ENCODE measurements at regions of chr10 and their contacts with region 1.

Region 1: GRCh38 chr10:77846718-77847630 is 79.6 kb downstream of the DLG5 start:
- DNase-seq: peak; percentile 92

Region 2: DNA sequence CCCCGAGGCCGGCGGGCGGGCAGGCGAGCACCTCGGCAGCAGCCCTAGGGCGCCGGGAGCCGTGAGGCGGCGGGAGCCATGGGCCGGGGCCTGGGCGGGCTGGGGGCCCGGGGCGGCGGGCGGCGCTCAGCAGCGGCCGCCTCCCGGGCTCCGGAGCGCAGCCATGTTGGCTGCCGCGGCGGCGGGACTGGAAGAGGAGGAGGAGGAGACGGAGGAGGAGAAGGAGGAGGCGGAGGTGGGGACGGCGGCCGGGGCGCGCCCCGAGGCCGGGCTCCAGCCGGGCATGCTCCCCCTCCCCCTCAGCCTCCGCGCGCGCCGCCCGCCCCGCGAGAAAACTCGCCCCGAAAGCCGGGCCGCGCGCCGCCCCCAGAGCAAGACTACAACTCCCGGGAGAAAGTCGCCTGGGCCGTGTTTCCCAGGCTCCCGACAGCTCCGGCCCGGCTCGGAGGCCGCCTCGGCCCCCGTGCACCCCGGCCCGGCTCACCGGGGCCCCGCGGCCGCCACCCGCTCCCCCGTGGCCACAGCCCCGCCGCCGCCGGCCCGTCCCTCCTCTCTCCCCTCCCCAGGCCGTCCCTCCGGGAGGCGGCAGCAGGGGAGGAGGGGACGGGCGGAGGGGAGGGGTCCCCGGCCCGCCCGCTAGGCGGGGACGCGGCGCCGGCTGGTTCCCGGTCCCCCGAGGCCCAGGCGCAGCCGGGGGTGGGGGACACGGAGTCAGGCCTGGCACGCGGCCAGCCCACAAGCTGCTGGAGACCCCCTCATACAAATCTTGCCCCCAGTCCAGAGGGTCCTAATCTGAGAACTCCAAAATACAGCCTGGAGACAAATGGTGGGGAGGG is 79.8 kb after region 1 on chr10 and contains the start of gene DLG5:
- intact Hi-C with region 1: loop called in 1 of 2 experiments (anchors 5 kb)
- DNase-seq: peak; percentile 88
- total RNA-seq, gene DLG5: 34.4 to 39.9 TPM

Region 3: DNA sequence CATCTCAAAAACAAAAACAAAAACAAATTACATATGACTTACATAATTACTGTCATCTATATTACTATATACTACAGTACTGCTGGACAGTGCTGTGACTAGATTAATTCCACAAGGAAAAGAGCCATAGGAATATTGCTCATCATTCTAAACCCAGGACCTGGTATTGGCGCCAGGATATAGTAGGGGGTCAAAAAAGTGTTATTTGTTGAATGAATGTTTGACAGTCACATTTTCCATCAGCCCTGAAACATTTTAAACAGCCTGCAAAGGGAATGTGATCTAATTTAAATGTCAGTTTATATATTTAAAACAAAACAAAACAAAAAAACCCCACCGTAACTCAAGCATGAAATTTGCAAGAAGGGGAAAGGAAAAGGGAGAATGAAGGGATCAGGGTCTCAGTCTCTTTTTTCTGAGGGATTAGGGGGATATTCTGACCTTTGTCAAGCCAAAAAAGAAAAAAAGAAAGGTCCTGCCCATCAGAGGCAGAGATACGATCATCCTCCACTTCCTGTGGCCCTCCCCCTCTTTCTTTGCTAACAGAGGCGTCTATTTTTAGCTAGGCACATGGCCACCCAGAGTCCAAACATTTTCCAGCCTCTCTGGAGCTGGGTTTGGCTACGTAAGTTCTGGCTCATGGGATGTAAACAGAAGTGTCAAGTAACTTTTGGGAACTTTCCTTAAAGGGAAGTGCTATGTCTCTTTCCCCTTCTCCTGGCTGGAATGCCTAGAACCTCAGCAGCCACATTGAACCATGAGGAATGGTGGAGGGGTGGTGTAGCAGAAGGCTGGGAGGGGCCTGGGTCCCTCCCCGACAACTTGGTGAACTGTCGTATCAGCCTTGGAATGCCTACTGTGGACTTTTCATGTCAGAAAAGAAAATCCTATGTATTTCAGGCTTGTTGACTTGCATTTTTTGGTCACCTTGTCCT is 124.2 kb after region 1 on chr10:
- intact Hi-C with region 1: loop called (anchors 5 to 10 kb)
- DNase-seq: peak; percentile 85

Region 4: GRCh38 chr10:78029269-78030226 is 182.6 kb after region 1 on chr10 and contains the start of gene POLR3A:
- intact Hi-C with region 1: loop called in 1 of 2 experiments (anchors 10 kb)
- DNase-seq: peak; percentile 99
- total RNA-seq, gene POLR3A: 8.2 to 10.1 TPM

Region 5: DNA sequence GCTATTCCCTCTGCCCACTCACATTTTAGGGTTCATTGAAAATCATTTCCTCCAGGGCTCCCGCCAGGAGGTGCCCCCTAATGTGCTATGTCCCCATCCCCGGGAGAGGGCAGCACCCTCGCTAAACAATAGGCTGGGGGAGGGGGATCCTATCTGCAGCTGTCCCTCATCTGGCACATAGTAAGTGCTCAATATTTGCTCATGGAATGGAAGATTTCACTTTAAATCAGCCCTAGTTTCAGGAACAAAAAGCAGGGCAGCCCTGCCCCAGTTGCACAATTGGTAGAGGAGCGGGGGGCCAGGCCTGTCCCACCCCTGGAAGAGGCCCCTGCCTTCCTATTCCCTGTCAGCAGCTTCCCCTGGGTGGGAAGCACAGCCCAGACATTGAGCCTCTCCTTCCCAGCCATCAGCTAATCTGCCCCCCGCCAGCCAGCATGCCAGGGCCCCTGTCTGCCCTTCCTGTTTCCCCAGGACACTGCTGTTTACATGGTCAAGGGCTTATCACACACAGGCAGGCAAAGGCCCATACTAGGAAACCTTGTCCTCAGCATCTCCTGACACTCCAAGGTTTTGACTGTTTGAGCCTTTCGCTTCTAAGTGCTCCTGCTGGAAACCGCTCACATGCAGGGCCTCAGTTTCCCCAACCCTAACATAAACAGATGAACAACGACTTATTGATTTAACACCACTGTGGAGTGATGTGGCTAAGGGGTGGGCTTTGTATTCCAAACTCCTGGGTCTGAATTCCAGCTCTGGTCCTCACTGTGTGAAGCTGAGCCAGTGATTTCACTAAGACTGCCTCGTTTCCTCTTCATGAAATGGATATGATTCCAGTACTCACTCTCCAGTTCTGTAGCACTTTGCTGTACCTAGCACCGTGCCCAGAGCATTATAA is 1091.1 kb after region 1 on chr10:
- intact Hi-C with region 1: no loop called
- DNase-seq: no peak

Measured in posterior vena cava (tissue), 2 donors.